ENCODE measurements at regions of chr17 and their contacts with region 1.

Region 1: GRCh38 chr17:57939797-57940196 is 15.4 kb downstream of the CUEDC1 start:
- DNase-seq: no peak
- ATAC-seq: no peak
- H3K4me3 ChIP-seq: no peak overlapping the region
- H3K27ac ChIP-seq: no peak overlapping the region
- H3K4me1 ChIP-seq: peaks cover 74% of the 10 kb centered on the region
- H3K27me3 ChIP-seq: no peaks in the 10 kb centered on the region
- CTCF ChIP-seq: no peak
- EP300 ChIP-seq: no peak
- POLR2A ChIP-seq: no peak
- RAD21 ChIP-seq: no peak

Region 2: DNA sequence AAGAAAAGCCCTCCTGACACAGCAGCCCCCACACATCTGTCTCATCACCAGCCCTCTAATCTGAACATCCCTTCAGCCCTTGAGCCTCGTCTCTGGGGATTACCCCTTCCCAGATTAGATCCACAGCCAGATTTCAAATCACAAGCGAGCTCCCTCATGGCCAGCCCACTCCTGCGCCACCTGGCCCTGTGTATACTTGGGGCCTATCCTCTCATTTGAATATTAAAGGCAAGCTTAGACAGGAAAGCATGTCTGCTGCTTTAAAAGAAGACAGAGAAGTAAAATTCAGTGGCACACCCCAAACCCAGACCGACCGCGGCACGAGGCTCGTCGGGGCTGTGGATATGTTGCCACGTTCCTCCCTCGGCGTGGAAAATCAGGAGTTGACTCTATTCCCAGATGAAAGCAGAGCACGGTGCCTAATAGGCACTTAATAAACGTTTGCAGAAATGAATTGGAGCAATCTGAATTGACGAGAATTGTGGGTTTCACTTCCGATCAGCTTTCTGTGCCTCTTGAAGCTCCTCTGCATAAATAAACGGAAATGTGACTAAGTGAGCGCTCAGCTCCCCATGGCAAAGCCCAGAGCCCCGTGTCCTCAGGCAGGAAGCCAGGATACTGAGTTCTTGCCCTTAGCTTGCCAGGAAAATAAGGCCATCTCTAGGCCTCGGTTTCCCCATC is 302.7 kb before region 1 on chr17:
- CTCF ChIA-PET with region 1: no interaction called
- POLR2A ChIA-PET with region 1: no interaction called
- in situ Hi-C with region 1: no loop called
- intact Hi-C with region 1: no loop called
- DNase-seq: no peak
- ATAC-seq: no peak
- H3K4me3 ChIP-seq: no peak overlapping the region
- H3K27ac ChIP-seq: no peak overlapping the region
- H3K4me1 ChIP-seq: no peaks in the 10 kb centered on the region
- H3K27me3 ChIP-seq: no peaks in the 10 kb centered on the region
- CTCF ChIP-seq: no peak
- EP300 ChIP-seq: no peak
- POLR2A ChIP-seq: no peak
- RAD21 ChIP-seq: no peak

Region 3: GRCh38 chr17:57875309-57876115 is 64.3 kb before region 1 on chr17:
- CTCF ChIA-PET with region 1: no interaction called
- POLR2A ChIA-PET with region 1: interaction called, 3 read pairs
- in situ Hi-C with region 1: no loop called
- intact Hi-C with region 1: loop called (anchors 1 kb)
- DNase-seq: peak; percentile 93
- ATAC-seq: peak; percentile 85
- H3K4me3 ChIP-seq: peak overlapping the region in 1 of 3 experiments; percentile 15; a peak in 1 of 6 replicates
- H3K27ac ChIP-seq: peak overlapping the region; percentile 64
- H3K4me1 ChIP-seq: peaks cover 68% of the 10 kb centered on the region
- H3K27me3 ChIP-seq: no peaks in the 10 kb centered on the region
- CTCF ChIP-seq: peak; percentile 62
- EP300 ChIP-seq: peak in 1 of 2 experiments; percentile 51; a peak in 1 of 4 replicates
- POLR2A ChIP-seq: no peak
- RAD21 ChIP-seq: peak; percentile 60; the same call in 1 of the 2 replicates

Region 4: GRCh38 chr17:57955183-57955931 is 15.6 kb after region 1 on chr17 and contains the start of gene CUEDC1:
- CTCF ChIA-PET with region 1: no interaction called
- POLR2A ChIA-PET with region 1: interaction called, 35 read pairs
- in situ Hi-C with region 1: no loop called
- intact Hi-C with region 1: loop called (anchors 2 kb)
- DNase-seq: no peak
- ATAC-seq: peak; percentile 75
- H3K4me3 ChIP-seq: peak within 1 kb of the TSS; percentile 71 to 92 (median 73)
- H3K27ac ChIP-seq: peak within 1 kb of the TSS; percentile 15
- H3K4me1 ChIP-seq: peaks cover 65% of the 10 kb centered on the region
- H3K27me3 ChIP-seq: peaks cover 16 to 39% of the 10 kb centered on the region in 2 experiments
- CTCF ChIP-seq: peak; percentile 52
- EP300 ChIP-seq: no peak
- POLR2A ChIP-seq: no peak
- RAD21 ChIP-seq: 0 out of 2 replicates have a peak, but pooled peaks have one; percentile 6
- total RNA-seq, gene CUEDC1: 4.2 and 7.4 TPM in 2 replicates

Region 5: DNA sequence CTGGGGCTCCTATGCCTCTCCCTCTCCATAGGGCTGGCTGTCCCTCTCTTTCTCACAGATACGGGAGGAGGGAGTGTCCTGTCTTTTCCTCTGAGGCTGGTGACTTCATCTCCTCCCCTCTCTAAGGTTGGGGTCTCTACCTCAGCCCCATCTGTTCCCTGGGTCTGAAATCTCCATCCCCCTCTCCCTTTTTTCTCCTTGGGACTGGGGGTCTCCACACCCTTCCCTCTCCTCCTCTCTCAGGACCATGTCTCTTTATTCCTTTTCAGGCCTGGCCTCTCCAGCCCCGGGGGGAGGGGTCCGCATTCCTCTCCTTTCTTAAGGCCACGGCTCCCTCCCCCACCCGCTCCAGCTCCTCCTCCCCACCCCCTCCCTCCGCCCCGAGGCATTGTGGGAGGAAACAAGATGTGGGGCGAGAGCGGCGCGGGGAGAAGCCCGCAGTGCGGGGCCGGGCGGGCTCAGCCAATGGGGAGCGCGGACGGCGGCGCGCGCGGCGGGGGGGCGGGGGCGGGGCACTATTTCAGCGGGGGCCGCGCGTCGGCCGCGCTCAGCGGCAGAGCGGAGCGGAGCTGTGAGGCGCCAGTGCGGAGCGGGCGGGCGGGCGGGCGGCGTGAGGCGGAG is 143.2 kb after region 1 on chr17 and contains the start of gene DYNLL2:
- CTCF ChIA-PET with region 1: no interaction called
- POLR2A ChIA-PET with region 1: interaction called, 10 read pairs
- in situ Hi-C with region 1: no loop called
- intact Hi-C with region 1: no loop called
- DNase-seq: peak; percentile 85
- ATAC-seq: peak; percentile 76
- H3K4me3 ChIP-seq: peak within 1 kb of the TSS; percentile 90 to 99 (median 95)
- H3K27ac ChIP-seq: peak within 1 kb of the TSS; percentile 78
- H3K4me1 ChIP-seq: peaks cover 50% of the 10 kb centered on the region
- H3K27me3 ChIP-seq: peaks cover 0 to 14% of the 10 kb centered on the region in 2 experiments; a peak in 3 of 5 replicates
- CTCF ChIP-seq: no peak
- EP300 ChIP-seq: no peak
- POLR2A ChIP-seq: peak; percentile 66 to 76; a peak in 3 of 4 replicates
- RAD21 ChIP-seq: no peak
- total RNA-seq, gene DYNLL2: 29.0 and 34.8 TPM in 2 replicates

Measured in HepG2 (cell line).